Colonic mucosa (tissue), 4 donors: ENCODE measurements at regions of chr9 and their contacts with region 1.

Region 1: DNA sequence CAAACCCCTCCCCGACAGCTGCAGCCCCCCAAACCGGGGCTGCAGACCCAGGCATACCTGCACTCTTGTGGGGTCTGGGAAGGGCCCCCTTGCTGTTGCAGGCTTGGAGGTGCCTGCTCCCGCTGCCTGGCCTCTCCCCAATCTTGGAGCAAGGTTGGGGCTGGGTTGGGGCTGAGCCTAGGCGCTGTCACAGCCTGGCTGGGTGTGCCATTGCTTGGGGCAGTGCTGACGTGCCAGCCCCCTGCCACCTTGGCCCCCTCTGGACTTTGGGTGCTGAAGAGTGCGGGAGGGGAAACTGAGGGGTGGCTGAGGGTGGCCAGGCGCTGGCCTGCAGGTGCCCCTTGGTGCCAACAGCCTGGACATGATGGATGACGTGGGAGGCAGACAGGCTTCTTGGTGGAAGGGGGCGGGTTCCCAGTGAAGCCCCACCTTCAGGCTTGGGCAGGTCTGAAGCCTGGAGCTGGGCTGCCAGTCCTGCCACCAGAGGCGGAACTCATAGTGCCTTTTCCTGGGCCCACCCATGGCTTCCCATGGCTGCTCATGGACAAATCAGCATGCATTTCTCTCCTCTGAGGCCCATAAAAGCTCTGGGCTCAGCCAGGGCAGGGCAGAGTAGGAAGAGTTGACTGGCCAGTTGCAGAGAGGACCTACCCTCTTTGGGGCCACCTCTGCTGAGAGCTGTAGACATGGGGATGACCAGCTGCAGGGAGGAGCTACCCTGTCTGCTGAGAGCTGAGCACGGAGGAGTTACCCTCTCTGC is 19.1 kb downstream of the TMEM38B start:
- DNase-seq: no peak
- H3K4me3 ChIP-seq: no peak overlapping the region
- H3K27ac ChIP-seq: no peak overlapping the region
- H3K4me1 ChIP-seq: no peaks in the 10 kb centered on the region
- H3K27me3 ChIP-seq: no peaks in the 10 kb centered on the region
- CTCF ChIP-seq: no peak

Region 2: GRCh38 chr9:105608721-105609598 is 104.5 kb before region 1 on chr9:
- intact Hi-C with region 1: loop called (anchors 2 kb)
- DNase-seq: no peak
- H3K4me3 ChIP-seq: no peak overlapping the region
- H3K27ac ChIP-seq: no peak overlapping the region
- H3K4me1 ChIP-seq: no peaks in the 10 kb centered on the region
- H3K27me3 ChIP-seq: no peaks in the 10 kb centered on the region
- CTCF ChIP-seq: peak; percentile 24

Region 3: GRCh38 chr9:105656131-105656921 is 57.1 kb before region 1 on chr9:
- intact Hi-C with region 1: loop called (anchors 5 kb)
- DNase-seq: peak; percentile 41
- H3K4me3 ChIP-seq: peak overlapping the region; percentile 56
- H3K27ac ChIP-seq: no peak overlapping the region
- H3K4me1 ChIP-seq: no peaks in the 10 kb centered on the region
- H3K27me3 ChIP-seq: peaks cover 15% of the 10 kb centered on the region
- CTCF ChIP-seq: peak; percentile 35